ENCODE measurements at regions of chr9 and their contacts with region 1.

Region 1: DNA sequence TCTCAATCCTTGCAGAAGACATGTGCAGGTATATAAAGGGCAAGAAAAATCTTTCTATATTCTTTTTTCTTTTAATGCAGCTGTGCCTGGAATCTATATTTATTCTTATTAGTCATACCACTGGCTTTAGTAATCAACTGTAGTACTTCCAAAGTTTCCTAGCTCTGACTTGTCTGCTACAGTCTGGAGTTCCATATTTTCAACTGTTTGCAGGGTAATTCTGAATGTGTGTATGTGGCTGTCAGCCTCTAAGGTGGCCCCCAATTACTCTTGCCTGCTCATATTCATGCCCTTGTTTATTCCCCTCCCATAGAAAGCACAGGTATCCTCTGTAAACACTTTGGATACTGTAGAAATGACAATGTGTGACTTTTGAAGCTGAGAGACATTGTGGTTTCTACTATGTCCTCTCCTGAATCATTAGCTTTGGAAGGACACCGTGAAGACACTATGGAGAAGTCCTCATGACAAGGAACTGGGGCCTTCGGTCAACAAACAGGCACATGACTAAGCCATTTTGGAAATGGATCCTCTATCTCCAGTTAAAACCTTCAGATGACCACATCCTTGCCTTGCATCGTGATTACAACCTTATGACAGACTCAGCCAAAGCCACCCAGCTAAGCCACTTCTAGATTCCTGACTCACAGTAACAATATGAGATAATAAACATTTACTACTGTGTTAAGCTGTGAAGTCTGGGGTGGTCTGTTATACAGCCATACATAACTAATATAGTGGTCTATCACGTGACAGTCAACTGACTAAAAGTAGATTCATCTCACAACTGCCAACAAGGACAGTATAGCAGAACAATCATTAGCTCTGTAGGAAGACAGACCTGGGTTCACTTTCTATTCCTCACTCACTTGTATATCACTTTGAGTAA is 49.5 kb upstream of the SUSD1 start:
- DNase-seq: no peak
- ATAC-seq: no peak
- H3K4me3 ChIP-seq: no peak overlapping the region
- H3K27ac ChIP-seq: no peak overlapping the region
- H3K4me1 ChIP-seq: peaks cover 0 to 9% (median 0%) of the 10 kb centered on the region in 9 donors
- H3K27me3 ChIP-seq: no peaks in the 10 kb centered on the region
- CTCF ChIP-seq: no peak

Region 2: DNA sequence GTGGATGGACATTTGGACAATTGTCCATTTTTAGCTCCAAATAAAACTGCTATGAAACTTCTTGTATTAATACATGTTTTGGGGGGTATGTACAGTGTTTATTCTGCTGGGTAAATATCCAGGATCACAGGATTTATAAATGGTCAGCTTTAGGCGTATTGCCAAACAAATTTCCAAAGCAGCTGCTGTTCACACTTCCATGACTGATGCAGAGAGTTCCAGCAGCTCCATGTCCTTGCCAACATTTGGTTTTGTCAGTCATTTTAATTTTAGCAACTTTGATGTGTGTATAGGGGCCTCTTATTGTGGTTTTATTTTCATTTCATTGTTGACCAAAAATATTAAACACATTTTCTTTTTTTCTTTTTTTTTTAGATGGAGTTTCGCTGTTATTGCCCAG is 39.7 kb before region 1 on chr9:
- intact Hi-C with region 1: loop called in 1 of 10 experiments (anchors 5 kb)
- DNase-seq: no peak
- ATAC-seq: no peak
- H3K4me3 ChIP-seq: no peak overlapping the region
- H3K27ac ChIP-seq: no peak overlapping the region
- H3K4me1 ChIP-seq: peaks cover 0 to 16% (median 0%) of the 10 kb centered on the region in 9 donors
- H3K27me3 ChIP-seq: no peaks in the 10 kb centered on the region
- CTCF ChIP-seq: no peak

Region 3: DNA sequence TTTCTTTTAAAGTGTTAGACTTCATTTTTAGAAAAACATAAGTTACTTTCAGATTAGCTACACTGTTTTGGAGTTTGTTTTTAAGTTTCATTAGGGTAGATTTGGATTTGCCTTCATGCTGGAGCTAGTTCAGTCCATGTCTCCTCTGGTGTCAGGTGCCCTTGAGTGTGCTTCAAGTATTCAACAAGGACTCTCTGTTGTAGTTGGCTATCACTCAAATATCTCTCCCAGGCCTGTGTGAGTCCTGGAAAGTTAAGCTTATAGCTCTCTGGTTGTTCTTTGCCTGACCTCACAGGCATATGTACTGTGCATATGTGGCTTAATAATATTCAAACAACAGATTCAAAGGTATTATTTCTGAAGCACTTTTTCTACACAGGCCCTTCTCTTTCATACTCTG is 63.4 kb after region 1 on chr9:
- intact Hi-C with region 1: no loop called
- DNase-seq: no peak
- ATAC-seq: peak in 6 of 8 donors; percentile 58 to 82 (median 72)
- H3K4me3 ChIP-seq: no peak overlapping the region
- H3K27ac ChIP-seq: no peak overlapping the region
- H3K4me1 ChIP-seq: peaks cover 0 to 31% (median 14%) of the 10 kb centered on the region in 9 donors
- H3K27me3 ChIP-seq: no peaks in the 10 kb centered on the region
- CTCF ChIP-seq: no peak

Measured in heart right ventricle (tissue), 16 donors.